ENCODE measurements at regions of chr12 and their contacts with region 1.

Region 1: DNA sequence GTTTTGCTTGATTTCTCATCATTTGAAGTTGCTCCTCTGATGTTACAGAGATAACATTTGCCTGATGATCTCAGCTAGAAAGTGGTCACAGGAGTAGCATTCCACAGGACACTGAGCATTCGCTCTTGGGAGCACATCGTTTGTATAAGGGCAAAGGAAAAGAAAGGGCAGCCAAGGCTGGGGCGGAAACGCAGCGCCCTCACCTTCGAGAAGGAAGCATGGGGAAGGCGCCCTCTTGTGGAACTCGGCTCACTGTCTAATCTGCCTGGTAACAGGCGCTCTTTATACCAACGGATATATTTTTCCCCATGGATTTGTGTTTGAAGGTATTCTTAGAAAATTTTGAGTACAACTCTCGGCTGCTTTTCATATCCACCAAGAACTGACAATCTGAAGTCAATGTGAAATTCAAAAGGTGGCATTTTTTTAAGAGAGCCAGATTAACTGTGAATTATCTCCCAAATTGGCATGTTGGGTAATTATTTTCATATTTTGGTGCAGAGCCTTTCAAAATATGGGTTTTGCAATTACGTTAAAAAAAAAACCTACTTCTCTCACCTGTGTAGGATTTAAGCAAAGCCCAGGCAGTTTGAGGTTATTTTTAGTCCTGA is 172.7 kb downstream of the CAND1 start:
- DNase-seq: peak; percentile 90 to 91
- H3K4me3 ChIP-seq: peak overlapping the region in 1 of 2 donors; percentile 2
- H3K27ac ChIP-seq: peak overlapping the region; percentile 26 to 35
- H3K4me1 ChIP-seq: peaks cover 0 to 14% (median 3%) of the 10 kb centered on the region in 4 donors
- H3K27me3 ChIP-seq: no peaks in the 10 kb centered on the region
- CTCF ChIP-seq: peak; percentile 70 to 84

Region 2: DNA sequence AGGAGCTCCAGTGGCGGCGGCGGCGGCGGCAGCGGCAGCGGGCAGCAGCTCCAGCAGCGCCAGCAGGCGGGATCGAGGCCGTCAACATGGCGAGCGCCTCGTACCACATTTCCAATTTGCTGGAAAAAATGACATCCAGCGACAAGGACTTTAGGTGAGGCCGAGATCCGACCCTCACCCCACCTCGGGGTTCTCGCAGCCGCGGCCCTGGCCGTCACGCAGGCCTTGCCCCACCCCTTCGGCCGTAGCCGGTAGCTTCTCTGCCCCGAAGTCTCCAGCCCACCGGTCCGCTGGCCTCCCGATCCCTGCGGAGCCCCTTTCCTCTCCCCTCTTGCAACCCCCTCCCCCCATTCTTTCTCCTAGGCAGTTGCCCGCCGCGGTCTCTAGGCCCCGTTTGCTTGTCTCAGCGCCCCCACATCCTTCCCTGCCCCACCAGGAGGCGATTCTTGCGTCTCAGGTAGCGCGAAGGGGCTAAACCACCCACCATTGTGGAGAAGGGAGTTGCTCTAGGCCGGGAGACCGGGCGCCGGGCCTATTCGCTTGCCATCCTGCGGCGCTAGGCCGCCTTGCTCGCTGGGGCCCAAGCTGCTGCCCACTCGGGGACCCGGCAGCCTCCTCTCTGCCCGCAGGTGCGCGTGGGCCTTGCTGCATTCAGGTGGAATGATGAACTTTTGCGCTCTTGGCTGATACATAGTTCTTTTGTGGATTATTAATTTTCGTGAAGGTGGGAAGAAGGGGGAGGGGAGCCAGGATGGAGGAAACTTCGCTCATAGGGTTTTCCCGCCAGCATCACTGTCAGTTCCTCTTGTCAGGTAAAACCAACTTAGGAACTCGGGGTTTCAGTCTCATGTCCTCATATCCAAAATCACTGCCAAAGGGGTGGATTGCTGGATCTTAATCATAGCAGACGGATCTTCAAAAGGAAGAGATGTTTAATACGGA is 171.9 kb before region 1 on chr12:
- intact Hi-C with region 1: loop called (anchors 10 kb)
- DNase-seq: peak; percentile 33 to 79
- H3K4me3 ChIP-seq: peak overlapping the region; percentile 64 to 87
- H3K27ac ChIP-seq: peak overlapping the region; percentile 95 to 97
- H3K4me1 ChIP-seq: peaks cover 0 to 54% (median 28%) of the 10 kb centered on the region in 4 donors
- H3K27me3 ChIP-seq: no peaks in the 10 kb centered on the region
- CTCF ChIP-seq: peak in 1 of 2 experiments; percentile 7

Region 3: DNA sequence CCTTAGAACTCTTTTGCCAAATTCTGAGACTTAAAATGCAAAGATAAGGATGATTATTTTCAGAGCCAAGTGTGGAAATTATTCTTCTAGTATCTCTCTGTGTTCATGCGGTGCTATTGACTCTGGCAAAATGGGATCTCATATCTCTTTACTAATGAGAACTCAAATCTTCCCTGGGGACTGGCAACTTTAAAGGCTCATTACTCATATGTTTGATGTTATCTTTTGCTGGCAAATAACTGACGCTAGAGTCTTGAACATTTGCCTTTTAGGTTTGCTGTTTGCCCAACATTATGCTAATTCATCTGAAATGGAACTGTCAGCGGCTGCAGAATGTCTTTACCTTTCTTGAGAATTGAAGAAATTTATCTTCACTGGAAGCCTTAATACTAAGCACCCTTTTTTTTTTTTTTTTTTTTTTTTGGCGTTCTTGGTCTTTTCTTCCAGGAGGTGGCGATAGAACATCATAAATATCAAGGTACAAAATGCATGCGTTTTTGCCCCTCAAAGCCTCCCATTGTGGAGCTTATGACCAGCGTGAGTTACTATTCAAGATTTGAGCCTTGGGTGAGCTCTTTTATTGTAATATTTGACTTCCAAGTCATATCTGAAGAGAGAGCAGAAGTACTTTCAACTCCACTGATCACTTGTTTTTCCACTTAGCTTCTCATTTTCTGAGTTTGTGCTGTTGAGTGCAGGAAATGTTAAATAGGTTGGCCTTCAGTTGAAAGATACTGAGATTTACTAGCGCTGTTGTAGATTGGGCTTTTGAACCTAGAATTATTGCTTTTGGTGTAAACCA is 86.1 kb before region 1 on chr12:
- intact Hi-C with region 1: loop called (anchors 2 kb)
- DNase-seq: no peak
- H3K4me3 ChIP-seq: no peak overlapping the region
- H3K27ac ChIP-seq: peak overlapping the region; percentile 23 to 48
- H3K4me1 ChIP-seq: peaks cover 0 to 24% (median 11%) of the 10 kb centered on the region in 4 donors
- H3K27me3 ChIP-seq: no peaks in the 10 kb centered on the region
- CTCF ChIP-seq: peak; percentile 35 to 56

Measured in tibial artery (tissue), 4 donors.